Endothelial cell of umbilical vein (primary cell): ENCODE measurements at regions of chr3 and their contacts with region 1.

Region 1: GRCh38 chr3:187679638-187680396 is 9.6 kb upstream of the SST start:
- DNase-seq: peak; percentile 58
- H3K4me3 ChIP-seq: no peak overlapping the region
- H3K27ac ChIP-seq: no peak overlapping the region
- H3K4me1 ChIP-seq: no peaks in the 10 kb centered on the region
- H3K27me3 ChIP-seq: peaks cover 0 to 2% of the 10 kb centered on the region in 2 experiments
- CTCF ChIP-seq: peak; percentile 83 to 89
- POLR2A ChIP-seq: no peak

Region 2: DNA sequence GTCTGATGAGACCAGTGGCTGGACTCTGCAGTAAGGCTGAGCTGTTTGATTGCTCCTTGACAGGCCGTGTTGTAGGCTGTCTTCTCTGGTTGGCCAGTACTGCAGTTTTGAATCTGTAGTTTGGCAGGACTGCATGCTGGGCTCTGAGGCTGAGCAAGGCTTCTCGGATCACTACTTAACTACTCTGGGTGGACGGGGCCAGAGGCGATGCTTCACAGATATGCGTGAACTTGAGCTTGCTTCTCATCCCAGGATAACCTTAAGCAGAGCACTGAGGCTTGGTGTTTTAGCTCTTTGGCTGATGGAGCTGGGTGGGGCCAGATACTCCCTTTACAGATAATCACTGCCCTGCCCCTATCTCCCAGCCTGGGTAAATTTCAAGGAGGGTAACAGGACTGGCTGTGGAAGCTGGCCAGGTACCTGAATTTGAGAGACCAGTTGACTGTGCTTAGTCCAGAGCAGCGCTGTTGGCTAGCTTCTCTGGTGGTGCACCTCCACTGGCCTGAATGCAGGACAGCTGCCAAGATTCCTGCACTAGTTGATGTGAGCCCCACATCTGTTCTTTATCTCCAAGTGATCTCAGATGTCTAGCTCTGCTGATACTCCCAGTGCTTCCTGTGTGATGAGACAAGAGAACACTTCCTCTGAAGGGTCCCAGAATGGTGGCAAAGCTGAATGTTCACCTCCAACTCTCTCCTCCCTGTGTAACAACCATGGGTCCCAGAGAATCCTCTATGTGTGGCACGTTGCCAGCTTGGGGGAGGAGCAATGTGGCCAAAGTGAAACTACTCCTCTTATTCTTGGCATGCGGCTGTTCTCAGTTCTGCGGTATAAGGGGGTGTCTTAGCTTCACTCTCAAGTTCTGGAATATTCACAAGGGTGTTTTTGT is 578.4 kb before region 1 on chr3:
- CTCF ChIA-PET with region 1: no interaction called
- POLR2A ChIA-PET with region 1: no interaction called
- dilution Hi-C with region 1: no loop called
- intact Hi-C with region 1: no loop called
- DNase-seq: peak; percentile 90
- H3K4me3 ChIP-seq: peak overlapping the region; percentile 36 to 81 (median 71)
- H3K27ac ChIP-seq: peak overlapping the region; percentile 62
- H3K4me1 ChIP-seq: peaks cover 13% of the 10 kb centered on the region
- H3K27me3 ChIP-seq: no peaks in the 10 kb centered on the region
- CTCF ChIP-seq: no peak
- POLR2A ChIP-seq: no peak

Region 3: GRCh38 chr3:187210545-187211327 is 469.1 kb before region 1 on chr3:
- CTCF ChIA-PET with region 1: interaction called, 13 read pairs
- POLR2A ChIA-PET with region 1: no interaction called
- dilution Hi-C with region 1: no loop called
- intact Hi-C with region 1: no loop called
- DNase-seq: no peak
- H3K4me3 ChIP-seq: no peak overlapping the region
- H3K27ac ChIP-seq: no peak overlapping the region
- H3K4me1 ChIP-seq: no peaks in the 10 kb centered on the region
- H3K27me3 ChIP-seq: peaks cover 0 to 2% of the 10 kb centered on the region in 2 experiments
- CTCF ChIP-seq: no peak
- POLR2A ChIP-seq: no peak

Region 4: GRCh38 chr3:187295316-187296034 is 384.3 kb before region 1 on chr3:
- CTCF ChIA-PET with region 1: interaction called, 12 read pairs
- POLR2A ChIA-PET with region 1: no interaction called
- dilution Hi-C with region 1: loop called (anchors 25 kb)
- intact Hi-C with region 1: no loop called
- DNase-seq: no peak
- H3K4me3 ChIP-seq: no peak overlapping the region
- H3K27ac ChIP-seq: no peak overlapping the region
- H3K4me1 ChIP-seq: no peaks in the 10 kb centered on the region
- H3K27me3 ChIP-seq: peaks cover 3% of the 10 kb centered on the region in 2 experiments
- CTCF ChIP-seq: no peak
- POLR2A ChIP-seq: no peak

Region 5: DNA sequence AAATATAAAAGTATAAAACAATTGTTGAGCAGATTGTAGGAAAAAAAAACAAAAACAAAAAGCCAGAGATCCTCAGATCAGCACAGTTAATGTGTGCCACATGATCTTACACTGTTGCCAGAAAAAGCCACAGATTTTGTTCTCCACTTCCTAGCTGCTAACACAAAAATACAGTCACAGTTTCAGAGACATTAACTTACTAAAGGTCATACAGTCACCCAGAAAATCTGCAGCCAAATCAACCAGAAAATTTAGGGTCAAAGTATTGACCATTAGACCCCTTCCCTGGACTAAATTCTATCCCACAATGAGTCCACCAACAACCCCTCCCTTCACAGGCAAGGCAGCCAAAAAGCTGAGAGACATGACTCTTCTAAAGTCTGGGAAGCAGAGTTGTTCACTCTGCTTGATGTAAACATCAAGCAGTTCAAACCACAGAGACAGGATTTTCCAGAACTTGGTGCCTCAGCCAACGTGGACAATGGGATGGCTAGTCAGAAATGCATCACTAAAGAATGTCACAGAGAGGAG is 68.8 kb before region 1 on chr3:
- CTCF ChIA-PET with region 1: interaction called, 47 read pairs
- POLR2A ChIA-PET with region 1: no interaction called
- dilution Hi-C with region 1: no loop called
- intact Hi-C with region 1: loop called (anchors 1 kb)
- DNase-seq: no peak
- H3K4me3 ChIP-seq: no peak overlapping the region
- H3K27ac ChIP-seq: no peak overlapping the region
- H3K4me1 ChIP-seq: no peaks in the 10 kb centered on the region
- H3K27me3 ChIP-seq: no peaks in the 10 kb centered on the region
- CTCF ChIP-seq: no peak
- POLR2A ChIP-seq: no peak

Region 6: DNA sequence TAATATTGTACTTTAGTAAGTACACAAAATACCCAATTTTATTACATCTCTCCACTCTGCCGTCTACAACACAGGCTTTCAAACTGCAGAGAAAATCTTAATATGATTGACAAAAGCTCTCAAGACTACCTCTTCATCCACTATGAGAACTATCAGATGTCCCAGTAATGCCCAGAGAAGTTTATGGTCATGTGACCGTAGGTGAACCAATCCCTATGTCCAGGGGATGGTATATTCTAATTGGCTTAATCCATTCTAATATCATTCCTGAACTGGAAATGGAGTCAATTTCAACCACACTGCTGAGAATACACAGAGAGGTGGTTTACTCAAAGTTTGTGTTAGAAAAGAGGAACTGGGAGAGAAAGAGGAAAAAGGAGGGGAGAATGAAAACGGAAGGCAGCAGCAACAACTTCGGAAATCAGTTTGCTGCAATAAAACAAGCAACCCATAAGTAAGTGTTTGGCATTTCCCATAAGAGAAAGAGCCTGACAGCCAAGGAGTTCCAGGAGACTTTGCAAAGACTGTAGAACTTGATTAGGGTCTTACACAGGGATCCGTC is 16.9 kb before region 1 on chr3:
- CTCF ChIA-PET with region 1: interaction called, 58 read pairs
- POLR2A ChIA-PET with region 1: no interaction called
- dilution Hi-C with region 1: no loop called
- intact Hi-C with region 1: no loop called
- DNase-seq: no peak
- H3K4me3 ChIP-seq: no peak overlapping the region
- H3K27ac ChIP-seq: no peak overlapping the region
- H3K4me1 ChIP-seq: no peaks in the 10 kb centered on the region
- H3K27me3 ChIP-seq: no peaks in the 10 kb centered on the region
- CTCF ChIP-seq: no peak
- POLR2A ChIP-seq: no peak

Region 7: GRCh38 chr3:187714404-187714979 is 34.7 kb after region 1 on chr3:
- CTCF ChIA-PET with region 1: interaction called, 34 read pairs
- POLR2A ChIA-PET with region 1: no interaction called
- dilution Hi-C with region 1: no loop called
- intact Hi-C with region 1: loop called (anchors 1 kb)
- DNase-seq: peak; percentile 71
- H3K4me3 ChIP-seq: no peak overlapping the region
- H3K27ac ChIP-seq: no peak overlapping the region
- H3K4me1 ChIP-seq: no peaks in the 10 kb centered on the region
- H3K27me3 ChIP-seq: no peaks in the 10 kb centered on the region
- CTCF ChIP-seq: peak; percentile 87 to 89
- POLR2A ChIP-seq: no peak